Calu3 (cell line): ENCODE measurements at regions of chr6 and their contacts with region 1.

Region 1: DNA sequence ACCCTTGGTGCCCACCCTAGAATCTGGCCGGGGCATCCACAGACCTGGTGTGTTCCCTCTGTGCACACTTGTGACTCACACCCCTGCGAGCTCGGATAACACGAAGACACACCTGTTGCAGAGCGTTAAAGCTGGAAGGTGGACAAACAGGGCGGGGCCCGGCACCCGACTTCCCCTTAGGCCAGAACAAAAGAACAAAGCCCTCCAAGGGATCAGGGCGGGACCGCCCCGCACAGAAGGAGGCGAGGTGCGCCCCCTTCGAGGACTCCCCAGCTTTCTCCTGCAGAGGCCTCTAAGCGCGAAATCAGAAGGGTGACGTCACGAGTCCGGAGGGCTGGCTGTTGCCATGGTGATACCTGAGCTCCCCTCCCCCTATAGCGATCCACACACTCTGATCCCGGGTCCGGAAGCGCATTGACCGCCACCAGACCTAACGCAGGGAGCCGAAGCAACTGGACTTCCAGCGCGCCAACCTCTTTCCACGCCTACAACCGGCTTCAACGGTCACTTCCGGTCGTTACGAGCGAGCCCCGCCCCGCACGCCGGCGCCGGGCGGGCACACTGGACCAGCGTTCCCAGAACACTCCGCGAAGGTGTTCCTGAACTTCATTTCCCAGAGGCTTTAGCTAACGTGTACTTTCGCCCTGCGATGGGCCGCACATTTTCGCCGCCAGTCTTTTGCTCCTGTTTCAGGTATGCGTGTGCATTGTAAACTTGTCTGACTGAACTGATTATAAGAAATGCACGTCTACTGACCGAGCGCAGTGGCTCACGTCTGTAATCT is at the start of gene ZNF184:
- DNase-seq: peak; percentile 98
- H3K4me3 Mint-ChIP-seq: peak within 1 kb of the TSS; percentile 88
- H3K27ac Mint-ChIP-seq: peak within 1 kb of the TSS; percentile 97
- H3K4me1 Mint-ChIP-seq: peaks cover 19% of the 10 kb centered on the region
- H3K27me3 Mint-ChIP-seq: no peaks in the 10 kb centered on the region
- CTCF ChIP-seq: no peak
- total RNA-seq, gene ZNF184: 11.0 and 11.6 TPM in 2 replicates

Region 2: DNA sequence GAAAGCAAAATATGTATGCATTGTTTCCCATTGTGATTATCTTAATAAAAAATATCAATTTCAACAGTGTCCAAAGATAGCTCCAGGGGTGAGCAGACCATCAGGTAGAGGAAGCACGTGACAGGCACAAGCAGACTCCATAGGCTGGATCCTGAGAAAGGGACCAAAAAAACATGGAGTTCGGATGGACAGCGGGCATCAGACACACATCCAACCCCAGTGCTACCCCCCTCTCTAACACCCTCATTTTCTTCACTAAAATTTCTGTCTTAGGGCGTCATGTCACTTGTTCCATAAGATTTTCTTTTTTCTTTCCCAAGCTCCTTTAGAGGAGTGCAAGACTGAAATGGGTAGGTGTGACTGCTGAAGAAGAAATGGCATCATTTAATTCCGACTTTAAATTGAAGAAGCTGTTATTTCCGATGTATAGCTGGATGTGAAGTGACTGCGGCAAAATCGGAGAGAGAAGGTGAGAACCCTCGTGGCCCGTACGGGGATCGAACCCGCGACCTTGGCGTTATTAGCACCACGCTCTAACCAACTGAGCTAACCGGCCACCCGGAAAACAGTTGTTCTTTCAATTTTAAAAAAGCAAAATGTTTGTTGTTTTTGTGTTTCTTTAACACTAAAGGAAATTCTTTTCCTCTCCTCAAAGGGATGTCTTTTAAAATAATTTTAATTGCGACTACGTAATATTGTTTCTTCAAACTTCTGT is 235.6 kb before region 1 on chr6:
- CTCF ChIA-PET with region 1: no interaction called
- intact Hi-C with region 1: loop called (anchors 5 kb)
- DNase-seq: peak; percentile 69
- H3K4me3 Mint-ChIP-seq: peak overlapping the region; percentile 20
- H3K27ac Mint-ChIP-seq: peak overlapping the region; percentile 50
- H3K4me1 Mint-ChIP-seq: peaks cover 39% of the 10 kb centered on the region
- H3K27me3 Mint-ChIP-seq: peaks cover 2% of the 10 kb centered on the region
- CTCF ChIP-seq: no peak

Region 3: GRCh38 chr6:27312146-27312949 is 160.5 kb before region 1 on chr6 and contains the start of gene POM121L2:
- CTCF ChIA-PET with region 1: interaction called, 3 read pairs
- intact Hi-C with region 1: loop called (anchors 5 kb)
- DNase-seq: peak; percentile 84
- H3K4me3 Mint-ChIP-seq: peak within 1 kb of the TSS; percentile 65
- H3K27ac Mint-ChIP-seq: no peak within 1 kb of the TSS
- H3K4me1 Mint-ChIP-seq: no peaks in the 10 kb centered on the region
- H3K27me3 Mint-ChIP-seq: no peaks in the 10 kb centered on the region
- CTCF ChIP-seq: peak; percentile 87
- total RNA-seq, gene POM121L2: not detected in 2 replicates

Region 4: DNA sequence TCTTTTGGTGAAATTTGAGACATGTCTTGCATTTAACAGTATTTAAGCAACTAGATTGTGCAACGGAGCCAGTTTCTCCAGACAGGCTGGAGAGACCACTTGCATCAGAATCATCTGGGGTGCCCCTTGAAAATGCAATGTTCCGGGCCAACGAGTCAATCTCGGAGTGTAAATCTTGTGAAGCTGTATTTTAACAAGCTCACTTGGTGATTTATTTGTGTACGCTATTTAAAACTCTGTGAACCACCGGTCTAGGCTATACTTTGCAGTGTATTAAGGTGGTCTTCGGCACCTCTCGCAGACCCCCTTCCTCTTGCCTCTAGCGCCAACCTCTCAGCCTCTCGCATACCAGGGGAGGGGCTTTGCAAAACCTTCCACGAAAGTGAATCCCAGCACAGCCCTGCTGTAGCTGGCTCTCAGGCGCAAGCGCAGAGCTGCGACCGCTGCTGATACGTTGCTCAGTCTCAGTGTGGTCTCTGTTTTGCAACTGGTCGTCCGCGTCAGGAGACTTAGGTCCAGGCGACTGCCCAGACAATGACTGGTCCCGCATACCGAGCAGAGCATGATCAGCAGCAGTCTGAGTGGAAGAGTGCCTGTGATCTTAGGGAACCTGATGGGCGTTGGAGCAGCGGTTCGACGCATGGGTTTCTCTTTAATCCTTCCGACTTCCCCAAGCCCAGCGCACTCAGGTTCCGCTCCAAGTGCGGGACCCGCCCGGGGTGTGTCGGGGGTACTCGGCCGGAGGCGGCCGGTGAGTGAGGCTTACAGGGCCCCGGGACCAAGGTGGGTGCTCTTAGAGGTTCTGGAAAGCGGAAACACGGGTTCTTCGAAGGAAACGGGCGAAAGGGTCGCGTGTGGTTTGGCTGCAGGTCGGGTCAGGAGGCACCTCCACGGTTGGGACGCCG is 84.3 kb before region 1 on chr6 and contains the start of gene ZNF391:
- CTCF ChIA-PET with region 1: no interaction called
- intact Hi-C with region 1: loop called (anchors 2 kb)
- DNase-seq: peak; percentile 78
- H3K4me3 Mint-ChIP-seq: peak within 1 kb of the TSS; percentile 98
- H3K27ac Mint-ChIP-seq: peak within 1 kb of the TSS; percentile 66
- H3K4me1 Mint-ChIP-seq: no peaks in the 10 kb centered on the region
- H3K27me3 Mint-ChIP-seq: no peaks in the 10 kb centered on the region
- CTCF ChIP-seq: no peak
- total RNA-seq, gene ZNF391: 3.7 and 4.6 TPM in 2 replicates

Region 5: GRCh38 chr6:27532820-27533538 is 60.2 kb after region 1 on chr6:
- CTCF ChIA-PET with region 1: no interaction called
- intact Hi-C with region 1: no loop called
- DNase-seq: no peak
- H3K4me3 Mint-ChIP-seq: no peak overlapping the region
- H3K27ac Mint-ChIP-seq: no peak overlapping the region
- H3K4me1 Mint-ChIP-seq: no peaks in the 10 kb centered on the region
- H3K27me3 Mint-ChIP-seq: no peaks in the 10 kb centered on the region
- CTCF ChIP-seq: no peak